Activated CD8-positive, alpha-beta T cell treated with anti-CD3 and anti-CD28 coated beads for 36 hours (primary cell): ENCODE measurements at regions of chr1 and their contacts with region 1.

Region 1: DNA sequence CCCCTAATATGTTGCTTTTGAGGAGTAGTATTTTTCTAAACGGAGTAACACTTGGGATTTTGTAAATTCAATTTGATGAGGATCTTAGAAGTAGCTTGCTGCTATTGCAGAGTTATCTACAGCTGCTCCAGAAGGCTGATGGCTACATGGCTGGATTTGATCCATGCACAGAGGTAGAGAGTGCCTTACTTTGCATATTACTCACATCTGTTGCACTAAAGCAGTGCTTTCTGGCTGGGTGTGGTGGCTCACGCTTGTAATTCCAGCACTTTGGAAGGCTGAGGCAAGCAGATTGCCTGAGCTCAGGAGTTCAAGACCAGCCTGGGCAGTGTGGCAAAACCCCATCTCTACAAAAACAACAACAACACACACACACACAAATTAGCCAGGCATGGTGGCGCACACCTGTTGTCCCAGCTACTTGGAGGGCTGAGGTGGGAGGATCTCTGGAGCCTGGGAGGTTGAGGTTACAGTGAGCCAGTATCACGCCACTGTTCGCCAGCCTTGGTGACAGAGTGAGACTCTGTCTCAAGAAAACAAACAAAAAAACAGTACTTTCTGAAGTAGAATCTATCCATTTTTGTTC is 24.6 kb downstream of the RALGPS2 start:
- DNase-seq: no peak
- ATAC-seq: no peak
- H3K4me3 Mint-ChIP-seq: no peak overlapping the region
- H3K27ac Mint-ChIP-seq: no peak overlapping the region
- H3K4me1 Mint-ChIP-seq: peaks cover 3% of the 10 kb centered on the region
- H3K27me3 Mint-ChIP-seq: no peaks in the 10 kb centered on the region
- CTCF ChIP-seq: no peak

Region 2: GRCh38 chr1:178532392-178532791 is 217.3 kb before region 1 on chr1:
- CTCF ChIA-PET with region 1: interaction called, 18 read pairs
- POLR2A ChIA-PET with region 1: no interaction called
- intact Hi-C with region 1: loop called (anchors 2 kb)
- DNase-seq: peak; percentile 83
- ATAC-seq: peak; percentile 87
- H3K4me3 Mint-ChIP-seq: no peak overlapping the region
- H3K27ac Mint-ChIP-seq: no peak overlapping the region
- H3K4me1 Mint-ChIP-seq: no peaks in the 10 kb centered on the region
- H3K27me3 Mint-ChIP-seq: no peaks in the 10 kb centered on the region
- CTCF ChIP-seq: peak; percentile 86

Region 3: DNA sequence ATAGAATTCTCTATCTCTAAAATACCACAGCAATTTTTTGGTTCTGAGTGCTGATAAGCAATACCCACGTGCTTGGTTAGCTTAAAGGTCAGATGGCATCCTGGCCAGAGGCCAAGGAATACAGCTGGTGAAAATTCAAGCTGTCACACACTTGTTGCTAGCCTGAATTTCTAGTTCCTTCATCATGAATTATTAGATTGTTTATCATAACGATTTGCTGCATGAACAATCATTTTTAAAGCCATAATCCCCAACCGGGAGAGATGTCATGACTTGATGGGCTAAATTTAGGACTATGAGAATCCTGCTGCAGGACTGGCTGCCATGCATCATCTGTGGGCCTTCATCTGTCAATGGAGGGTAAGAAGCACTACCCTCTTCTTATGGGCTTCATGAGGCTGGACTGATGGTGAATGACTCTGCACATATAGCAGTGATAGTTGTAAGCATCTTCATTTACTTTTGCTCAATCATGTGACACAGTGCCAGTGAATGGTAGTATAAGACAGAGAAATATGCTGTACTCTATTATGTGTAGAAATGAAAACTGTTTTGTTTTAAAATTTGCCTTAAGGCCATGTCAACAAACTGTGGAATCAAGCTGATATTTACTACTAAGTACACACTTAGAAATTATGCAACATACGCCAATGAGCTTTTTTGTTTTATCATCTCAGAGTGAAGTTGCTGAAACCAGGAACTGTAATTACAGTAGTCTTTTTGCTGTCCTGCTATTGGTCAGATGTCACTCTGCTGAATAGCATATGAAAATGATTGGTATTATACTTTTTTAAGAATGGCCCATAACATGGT is 105.2 kb before region 1 on chr1:
- CTCF ChIA-PET with region 1: no interaction called
- POLR2A ChIA-PET with region 1: no interaction called
- intact Hi-C with region 1: no loop called
- DNase-seq: peak; percentile 6
- ATAC-seq: no peak
- H3K4me3 Mint-ChIP-seq: no peak overlapping the region
- H3K27ac Mint-ChIP-seq: no peak overlapping the region
- H3K4me1 Mint-ChIP-seq: no peaks in the 10 kb centered on the region
- H3K27me3 Mint-ChIP-seq: peaks cover under 1% of the 10 kb centered on the region
- CTCF ChIP-seq: no peak

Region 4: GRCh38 chr1:178768423-178768822 is 18.7 kb after region 1 on chr1:
- CTCF ChIA-PET with region 1: interaction called, 14 read pairs
- POLR2A ChIA-PET with region 1: no interaction called
- intact Hi-C with region 1: no loop called
- DNase-seq: peak; percentile 23
- ATAC-seq: peak; percentile 84
- H3K4me3 Mint-ChIP-seq: no peak overlapping the region
- H3K27ac Mint-ChIP-seq: no peak overlapping the region
- H3K4me1 Mint-ChIP-seq: no peaks in the 10 kb centered on the region
- H3K27me3 Mint-ChIP-seq: no peaks in the 10 kb centered on the region
- CTCF ChIP-seq: peak; percentile 88